Motor neuron (in vitro differentiated cells): ENCODE measurements at regions of chr12 and their contacts with region 1.

Region 1: DNA sequence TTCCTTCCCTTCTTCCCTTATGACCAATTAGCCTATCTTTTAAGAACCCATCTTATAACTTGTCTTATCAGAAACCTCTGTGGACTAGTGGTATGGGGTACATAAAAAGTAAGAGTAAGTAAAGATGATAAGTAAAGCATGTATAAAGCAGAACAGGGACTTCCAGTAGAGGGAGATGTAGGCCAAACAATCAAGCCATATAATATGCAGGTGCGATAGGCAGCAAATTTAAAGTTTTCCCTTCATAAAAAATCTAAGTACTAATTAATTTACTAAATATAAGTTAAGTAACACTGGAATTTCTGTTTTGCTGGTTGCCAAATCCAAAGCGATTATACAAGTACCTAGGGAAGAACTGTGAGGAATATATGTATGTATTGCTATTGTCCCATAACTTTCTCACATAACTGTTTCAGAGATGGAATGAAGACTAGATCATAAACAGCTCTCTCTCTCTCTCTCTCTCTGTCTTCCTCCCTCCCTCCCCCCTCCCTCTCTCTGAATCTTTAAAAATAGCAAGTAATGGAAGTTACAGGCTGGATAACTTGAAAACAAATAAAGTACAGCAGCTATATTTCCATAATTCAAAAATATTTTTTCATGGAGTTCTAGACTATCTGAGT is 25.7 kb downstream of the METTL25 start:
- ATAC-seq: peak in 4 of 8 experiments; percentile 40 to 97 (median 78)
- H3K4me3 ChIP-seq: no peak overlapping the region
- H3K27ac ChIP-seq: no peak overlapping the region
- H3K4me1 ChIP-seq: no peaks in the 10 kb centered on the region

Region 2: GRCh38 chr12:82474798-82475184 is 90.8 kb after region 1 on chr12:
- in situ Hi-C with region 1: no loop called
- ATAC-seq: no peak
- H3K4me3 ChIP-seq: no peak overlapping the region
- H3K27ac ChIP-seq: no peak overlapping the region
- H3K4me1 ChIP-seq: no peaks in the 10 kb centered on the region

Region 3: DNA sequence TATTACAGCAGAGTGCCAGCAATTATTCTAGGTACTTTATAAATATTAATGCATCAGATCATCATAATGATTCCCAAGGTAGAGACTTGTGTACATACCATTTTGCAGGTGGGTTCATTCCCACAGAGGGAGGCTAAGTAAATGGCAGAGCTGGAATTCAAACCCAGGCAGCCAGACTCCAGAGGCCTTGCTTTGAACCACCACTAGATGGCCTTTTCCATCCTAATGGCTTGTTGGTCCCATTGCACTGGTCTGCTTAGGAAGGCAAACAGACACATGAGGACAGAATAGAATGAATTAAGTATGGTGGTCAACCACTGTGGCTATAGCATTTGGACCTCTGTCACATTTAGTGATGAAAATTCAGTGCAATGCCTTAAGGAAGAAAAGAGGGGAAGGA is 133.0 kb after region 1 on chr12:
- in situ Hi-C with region 1: loop called in 1 of 9 experiments (anchors 25 kb)
- ATAC-seq: peak in 1 of 8 experiments; percentile 14
- H3K4me3 ChIP-seq: no peak overlapping the region
- H3K27ac ChIP-seq: no peak overlapping the region
- H3K4me1 ChIP-seq: no peaks in the 10 kb centered on the region

Region 4: GRCh38 chr12:82608706-82609105 is 224.7 kb after region 1 on chr12:
- in situ Hi-C with region 1: loop called in 1 of 9 experiments (anchors 25 kb)
- ATAC-seq: peak in 2 of 8 experiments; percentile 23 to 43
- H3K4me3 ChIP-seq: no peak overlapping the region
- H3K27ac ChIP-seq: no peak overlapping the region
- H3K4me1 ChIP-seq: no peaks in the 10 kb centered on the region

Region 5: GRCh38 chr12:82627569-82628198 is 243.6 kb after region 1 on chr12:
- in situ Hi-C with region 1: loop called in 3 of 9 experiments (anchors 10 to 25 kb)
- ATAC-seq: peak in 4 of 8 experiments; percentile 46 to 85 (median 80)
- H3K4me3 ChIP-seq: no peak overlapping the region
- H3K27ac ChIP-seq: no peak overlapping the region
- H3K4me1 ChIP-seq: no peaks in the 10 kb centered on the region